ENCODE measurements at regions of chr9 and their contacts with region 1.

Region 1: GRCh38 chr9:110125207-110125751 is 82.7 kb downstream of the C9orf152 start:
- DNase-seq: peak; percentile 96 to 97
- H3K4me3 ChIP-seq: peak overlapping the region in 2 of 3 donors; percentile 11 to 12
- H3K27ac ChIP-seq: peak overlapping the region; percentile 91 to 95 (median 94)
- H3K4me1 ChIP-seq: peaks cover 74% of the 10 kb centered on the region in 2 donors
- H3K27me3 ChIP-seq: no peaks in the 10 kb centered on the region
- CTCF ChIP-seq: no peak
- POLR2A ChIP-seq: peak in 1 of 2 donors; percentile 98

Region 2: DNA sequence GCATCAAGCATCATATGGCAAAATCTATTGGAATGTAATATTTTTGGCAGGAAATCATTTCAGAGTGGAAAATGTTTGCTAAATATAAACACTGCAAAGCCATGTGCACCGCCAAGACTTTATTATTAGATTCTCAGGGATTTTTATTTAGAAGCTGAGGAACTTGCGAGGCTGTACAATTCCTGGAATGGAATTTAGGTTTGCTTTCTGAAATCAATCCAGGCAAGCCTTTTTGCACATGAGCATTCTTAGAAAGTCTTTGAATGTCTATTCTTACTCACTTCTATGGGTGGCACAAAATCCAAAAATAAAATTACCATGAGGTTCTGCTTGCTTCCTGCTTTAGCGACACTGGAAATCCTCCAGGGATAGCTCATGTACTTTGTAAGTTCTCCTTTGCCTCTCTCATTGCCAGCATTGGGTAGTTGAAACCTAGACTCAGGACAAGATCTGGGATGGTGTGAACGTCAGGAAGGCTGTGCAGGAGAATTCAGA is 416.8 kb before region 1 on chr9:
- intact Hi-C with region 1: no loop called
- DNase-seq: no peak
- H3K4me3 ChIP-seq: no peak overlapping the region
- H3K27ac ChIP-seq: no peak overlapping the region
- H3K4me1 ChIP-seq: no peaks in the 10 kb centered on the region
- H3K27me3 ChIP-seq: no peaks in the 10 kb centered on the region
- CTCF ChIP-seq: no peak
- POLR2A ChIP-seq: no peak

Region 3: DNA sequence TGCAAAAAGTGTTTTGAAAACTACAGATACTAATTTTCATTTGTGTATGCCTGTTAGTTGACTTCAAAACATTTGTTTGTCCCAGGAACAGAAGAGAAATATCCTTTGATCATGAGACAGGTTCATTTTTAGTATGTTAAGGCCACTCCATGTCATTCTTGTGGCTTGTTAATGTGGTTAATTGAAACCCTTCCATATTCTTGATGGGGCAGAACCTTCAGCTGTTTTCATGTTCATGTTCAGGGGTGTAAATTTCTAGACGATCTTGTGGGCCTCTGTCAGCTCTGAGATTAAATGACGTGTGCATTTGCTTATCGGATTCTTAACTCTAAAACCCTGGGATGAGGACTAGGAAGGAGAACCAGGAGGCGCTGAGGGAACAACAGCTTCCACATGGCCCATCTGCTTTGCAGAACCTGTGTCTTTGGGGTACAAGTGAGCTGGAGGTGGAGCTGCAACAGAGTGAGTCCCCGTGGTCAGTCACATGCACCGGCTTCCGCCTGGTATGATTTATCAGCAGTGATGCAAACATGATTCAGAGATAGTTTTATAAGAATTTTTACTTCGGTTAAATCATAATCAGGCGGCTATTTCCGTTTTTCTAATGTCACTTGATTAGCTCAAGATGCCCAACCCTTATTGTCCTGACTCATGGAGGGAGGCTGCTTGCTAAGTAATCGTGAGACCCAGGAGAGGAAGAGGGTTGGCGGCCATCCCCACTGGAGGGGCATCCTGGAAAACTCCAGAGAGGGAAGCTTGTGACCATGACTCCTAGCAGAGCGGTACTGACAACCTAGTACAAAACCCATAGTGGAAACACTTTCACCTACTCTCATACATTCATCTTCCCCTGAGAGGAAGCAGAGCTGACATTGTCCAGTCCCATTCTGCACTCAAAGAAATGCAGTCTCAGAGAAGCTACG is 55.7 kb before region 1 on chr9:
- intact Hi-C with region 1: loop called (anchors 10 kb)
- DNase-seq: peak in 1 of 2 donors; percentile 23
- H3K4me3 ChIP-seq: no peak overlapping the region
- H3K27ac ChIP-seq: peak overlapping the region in 2 of 3 donors; percentile 44 to 55
- H3K4me1 ChIP-seq: peaks cover 10 to 33% of the 10 kb centered on the region in 2 donors
- H3K27me3 ChIP-seq: no peaks in the 10 kb centered on the region
- CTCF ChIP-seq: no peak
- POLR2A ChIP-seq: no peak

Region 4: GRCh38 chr9:110486218-110486617 is 360.9 kb after region 1 on chr9:
- intact Hi-C with region 1: no loop called
- DNase-seq: no peak
- H3K4me3 ChIP-seq: no peak overlapping the region
- H3K27ac ChIP-seq: no peak overlapping the region
- H3K4me1 ChIP-seq: no peaks in the 10 kb centered on the region
- H3K27me3 ChIP-seq: no peaks in the 10 kb centered on the region
- CTCF ChIP-seq: no peak
- POLR2A ChIP-seq: no peak

Measured in thyroid gland (tissue), 4 donors.